Keratinocyte (primary cell): ENCODE measurements at regions of chr18 and their contacts with region 1.

Region 1: DNA sequence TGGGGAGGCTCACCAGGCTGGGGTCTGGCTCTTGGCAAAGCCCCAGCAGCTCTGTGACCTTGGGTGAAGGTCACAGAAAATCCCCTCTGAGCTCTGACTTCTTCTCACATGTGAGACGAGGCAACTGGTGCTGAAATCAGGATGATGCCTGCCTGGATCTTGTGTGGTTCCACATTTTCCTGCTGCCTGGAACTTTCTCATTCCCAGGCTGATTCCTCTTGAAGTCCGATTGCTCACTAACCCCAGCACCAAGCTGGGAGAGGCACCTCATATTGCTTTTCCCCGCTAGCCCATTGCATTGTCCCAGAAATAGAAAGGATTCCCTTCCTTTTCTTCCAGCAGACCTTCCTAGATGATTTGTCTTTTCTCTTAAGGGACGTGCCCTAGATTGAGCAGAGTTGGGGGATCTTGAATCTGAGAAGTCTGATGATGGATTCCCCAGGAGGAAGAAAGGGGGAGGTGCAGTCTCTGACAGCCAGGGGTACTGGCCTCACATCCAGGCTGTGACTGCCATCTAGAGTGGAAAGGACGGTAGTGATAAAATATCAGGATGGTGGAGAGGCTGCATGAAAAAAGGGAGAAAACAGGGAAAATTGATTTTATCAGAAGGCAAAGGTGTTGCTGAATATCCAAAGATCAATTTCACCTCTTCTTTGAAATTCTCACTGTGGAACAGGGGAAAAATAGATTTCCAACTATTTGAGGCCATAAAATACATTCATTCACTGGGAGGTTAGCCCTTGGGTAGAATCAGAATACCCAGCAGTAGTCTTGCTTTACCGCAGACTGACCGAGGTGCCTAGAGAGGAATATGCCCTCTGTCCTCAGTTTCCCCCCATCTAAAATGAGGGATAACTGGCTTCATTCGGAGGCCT is 96.3 kb downstream of the FAM210A start:
- DNase-seq: no peak
- H3K4me3 ChIP-seq: no peak overlapping the region
- H3K27ac ChIP-seq: no peak overlapping the region
- H3K4me1 ChIP-seq: no peaks in the 10 kb centered on the region
- H3K27me3 ChIP-seq: no peaks in the 10 kb centered on the region
- CTCF ChIP-seq: peak; percentile 60 to 80 (median 75)

Region 2: GRCh38 chr18:13216092-13216582 is 413.9 kb before region 1 on chr18:
- dilution Hi-C with region 1: loop called (anchors 25 kb)
- DNase-seq: no peak
- H3K4me3 ChIP-seq: no peak overlapping the region
- H3K27ac ChIP-seq: no peak overlapping the region
- H3K4me1 ChIP-seq: no peaks in the 10 kb centered on the region
- H3K27me3 ChIP-seq: peaks cover 54% of the 10 kb centered on the region
- CTCF ChIP-seq: peak; percentile 40 to 87 (median 73)